Cardiac septum (tissue), 1 donor: ENCODE measurements at regions of chr5 and their contacts with region 1.

Region 1: GRCh38 chr5:96614110-96614691 is 48.0 kb upstream of the CAST start:
- DNase-seq: no peak

Region 2: GRCh38 chr5:96447949-96448348 is 166.3 kb before region 1 on chr5:
- intact Hi-C with region 1: no loop called
- DNase-seq: no peak

Region 3: DNA sequence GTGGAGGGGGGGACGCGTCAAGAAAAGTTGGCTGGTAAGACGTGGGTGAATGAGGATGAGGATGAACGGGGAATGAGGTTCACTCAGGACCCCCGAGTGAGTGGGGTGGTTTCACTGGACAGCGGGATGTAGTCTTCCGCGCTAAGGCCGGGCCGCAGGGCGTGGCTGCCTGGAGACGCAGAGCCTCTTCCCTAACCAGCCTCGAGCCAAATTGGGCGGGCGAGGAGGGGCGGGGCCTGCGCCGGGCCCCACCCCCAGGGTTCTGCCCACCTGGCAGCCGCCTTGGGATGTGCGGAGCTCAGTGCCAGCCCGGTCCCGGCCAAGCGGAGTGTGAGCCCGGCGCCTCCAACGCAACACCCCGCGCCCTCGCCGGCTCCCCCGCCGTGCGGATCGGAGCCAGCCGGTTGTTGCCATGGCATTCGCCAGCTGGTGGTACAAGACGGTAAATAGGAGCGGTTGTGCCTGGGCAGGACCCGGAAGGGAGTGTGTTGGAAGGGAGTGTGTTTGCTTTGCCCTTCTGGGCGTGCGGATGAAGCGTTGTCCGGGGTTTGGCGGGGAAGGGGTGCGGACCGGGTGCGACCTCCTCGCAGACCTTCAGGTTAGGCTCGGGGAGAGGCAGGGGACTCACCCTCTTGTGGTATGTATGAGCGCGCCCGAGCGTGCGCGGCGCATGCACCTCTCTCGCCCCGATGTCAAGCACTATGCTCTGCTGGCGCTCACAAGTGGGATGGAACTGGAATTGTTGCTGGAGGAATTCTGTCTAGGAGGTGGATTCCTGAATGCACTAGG is 48.7 kb after region 1 on chr5:
- intact Hi-C with region 1: loop called (anchors 2 kb)
- DNase-seq: peak; percentile 98

Region 4: GRCh38 chr5:96687812-96688453 is 73.7 kb after region 1 on chr5:
- intact Hi-C with region 1: loop called (anchors 5 kb)
- DNase-seq: no peak

Region 5: DNA sequence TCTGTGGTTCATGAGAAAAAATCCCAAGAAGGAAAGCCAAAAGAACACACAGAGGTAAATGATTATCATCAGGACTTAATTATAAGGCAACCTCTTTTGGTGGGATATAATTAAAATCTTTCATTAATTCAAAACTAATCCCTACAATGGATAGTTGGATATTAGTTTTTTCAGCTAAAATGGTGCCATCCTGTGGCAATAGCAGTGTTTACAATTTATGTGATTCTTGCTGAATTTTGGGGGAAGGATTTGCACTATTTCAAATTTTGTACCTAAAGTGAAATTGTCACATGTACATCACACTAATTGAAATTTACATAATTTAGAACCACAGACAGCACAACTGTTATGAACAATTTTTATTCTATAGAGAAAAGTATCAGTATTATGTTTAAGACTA is 115.0 kb after region 1 on chr5:
- intact Hi-C with region 1: loop called (anchors 1 kb)
- DNase-seq: no peak